ENCODE measurements at regions of chr19 and their contacts with region 1.

Region 1: GRCh38 chr19:4139614-4140236 is 13.7 kb upstream of the CREB3L3 start:
- DNase-seq: peak; percentile 82
- H3K4me3 ChIP-seq: peak overlapping the region in 1 of 2 experiments; percentile 9; a peak in 1 of 4 replicates
- H3K27ac ChIP-seq: no peak overlapping the region
- H3K4me1 ChIP-seq: no peaks in the 10 kb centered on the region
- H3K27me3 ChIP-seq: no peaks in the 10 kb centered on the region
- CTCF ChIP-seq: peak; percentile 72
- EP300 ChIP-seq: no peak
- RAD21 ChIP-seq: peak; percentile 52

Region 2: DNA sequence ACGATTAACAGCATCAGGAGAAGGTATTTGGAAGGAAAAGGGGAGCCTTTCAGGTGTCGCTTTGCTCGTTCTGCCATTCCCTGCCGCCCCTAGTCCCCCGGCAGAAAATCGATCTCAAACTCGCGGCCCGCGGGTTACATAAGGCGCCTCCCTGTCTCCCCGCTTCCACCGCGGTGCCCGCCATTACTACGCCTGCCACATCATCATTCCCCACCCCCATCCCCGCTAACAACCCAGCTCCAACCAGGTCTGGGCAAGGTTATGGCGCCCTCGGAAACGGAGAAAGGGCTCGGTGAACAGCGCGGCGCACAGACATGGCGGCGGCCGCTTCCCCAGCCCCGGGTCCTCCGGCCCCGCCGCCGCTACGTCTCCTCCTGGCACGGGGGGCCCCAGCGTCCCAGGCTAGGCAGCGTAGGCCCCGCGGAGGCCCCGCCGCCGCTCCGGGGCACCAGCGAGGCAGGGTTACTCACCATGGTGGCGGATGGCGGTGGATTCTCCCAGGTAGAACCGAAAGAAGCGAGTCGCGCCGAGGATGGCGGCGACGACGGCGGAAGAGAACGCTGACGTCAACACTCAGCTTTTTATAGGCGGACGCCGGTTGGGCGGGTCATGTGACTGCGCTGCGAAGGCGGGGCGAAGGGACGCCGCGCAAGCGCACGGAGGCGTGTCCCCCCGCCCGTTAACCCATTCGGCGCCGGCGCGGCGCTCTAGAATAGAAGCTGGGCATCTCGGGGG is 154.7 kb before region 1 on chr19 and contains the start of gene EEF2:
- CTCF ChIA-PET with region 1: interaction called, 18 read pairs
- POLR2A ChIA-PET with region 1: no interaction called
- DNase-seq: peak; percentile 98
- H3K4me3 ChIP-seq: peak within 1 kb of the TSS; percentile 91 to 99
- H3K27ac ChIP-seq: peak within 1 kb of the TSS; percentile 90 to 91
- H3K4me1 ChIP-seq: peaks cover 15 to 37% of the 10 kb centered on the region in 2 experiments
- H3K27me3 ChIP-seq: no peaks in the 10 kb centered on the region
- CTCF ChIP-seq: no peak
- EP300 ChIP-seq: peak in 1 of 2 experiments; percentile 32; a peak in 1 of 4 replicates
- RAD21 ChIP-seq: no peak
- polyA plus RNA-seq, gene EEF2: 1,295 and 1,553 TPM in 2 replicates

Region 3: DNA sequence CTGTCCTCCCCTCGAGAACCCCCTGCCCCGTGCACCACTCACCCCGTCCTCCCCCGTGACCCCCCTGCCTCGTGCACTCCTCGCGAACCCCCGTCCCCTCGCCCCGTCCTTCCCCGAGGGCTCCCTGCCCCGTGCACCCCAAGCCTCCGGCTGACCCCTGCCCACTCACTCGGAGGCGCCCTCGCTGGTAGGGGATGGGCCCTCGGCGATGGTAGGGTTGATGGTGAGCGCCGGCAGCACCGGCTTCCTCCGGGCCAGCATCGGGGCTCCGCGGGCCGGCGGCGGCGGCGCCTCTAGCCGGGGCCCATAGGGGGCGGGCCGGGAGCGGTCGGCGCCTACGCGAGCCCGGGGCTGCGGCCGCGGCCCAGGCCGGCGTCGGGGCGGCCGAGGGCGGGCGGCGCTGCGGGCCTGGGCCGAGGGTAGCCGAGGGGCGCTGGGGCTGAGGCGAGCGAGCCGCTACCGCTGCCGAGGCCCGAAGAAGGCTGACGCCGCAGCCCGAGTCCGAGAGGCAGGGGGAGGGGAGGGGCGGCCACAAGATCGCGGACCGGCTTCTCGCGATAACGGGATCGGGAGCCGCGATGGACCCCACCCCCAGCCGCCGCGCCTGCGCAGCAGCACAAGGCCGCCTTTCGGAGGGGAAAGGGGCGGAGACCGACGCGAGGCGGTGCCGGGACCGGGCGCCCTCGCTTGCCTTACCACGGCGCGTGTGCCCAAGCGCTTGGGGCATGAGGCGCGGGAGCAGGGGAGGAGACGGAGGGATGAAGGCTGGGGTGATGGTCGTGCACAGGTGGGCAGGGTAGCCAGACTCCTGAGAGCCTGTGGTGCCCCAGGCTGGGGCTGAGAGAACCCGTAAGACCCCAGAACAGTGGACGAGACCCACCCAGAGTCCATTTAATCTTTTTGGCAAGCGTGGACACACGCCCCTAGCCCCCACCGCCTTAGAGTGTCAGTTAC is 15.8 kb before region 1 on chr19 and contains the start of gene MAP2K2:
- CTCF ChIA-PET with region 1: interaction called, 41 read pairs
- POLR2A ChIA-PET with region 1: no interaction called
- DNase-seq: peak; percentile 100
- H3K4me3 ChIP-seq: peak within 1 kb of the TSS; percentile 65 to 74
- H3K27ac ChIP-seq: peak within 1 kb of the TSS in 1 of 2 experiments; percentile 76; a peak in 2 of 4 replicates
- H3K4me1 ChIP-seq: peaks cover 0 to 14% of the 10 kb centered on the region in 2 experiments; a peak in 2 of 4 replicates
- H3K27me3 ChIP-seq: no peaks in the 10 kb centered on the region
- CTCF ChIP-seq: no peak
- EP300 ChIP-seq: no peak
- RAD21 ChIP-seq: no peak
- polyA plus RNA-seq, gene MAP2K2: 67.2 and 114 TPM in 2 replicates

Region 4: DNA sequence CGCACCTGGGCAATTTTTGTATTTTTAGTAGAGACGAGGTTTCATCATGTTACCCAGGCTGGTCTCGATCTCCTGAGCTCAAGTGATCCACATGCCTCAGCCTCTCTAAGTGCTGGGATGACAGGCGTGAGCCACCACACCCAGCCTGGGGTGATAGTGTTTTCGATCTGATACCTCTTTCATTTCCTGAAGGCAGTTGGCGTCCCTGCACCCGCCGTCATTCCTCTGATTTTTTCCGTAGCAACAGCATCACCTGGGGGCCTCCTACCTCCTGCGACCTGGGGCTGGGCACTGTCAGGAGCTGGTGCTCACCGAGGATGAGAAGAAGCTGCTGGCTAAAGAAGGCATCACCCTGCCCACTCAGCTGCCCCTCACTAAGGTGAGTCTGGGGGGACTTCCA is 24.5 kb after region 1 on chr19:
- CTCF ChIA-PET with region 1: interaction called, 26 read pairs
- POLR2A ChIA-PET with region 1: no interaction called
- DNase-seq: no peak
- H3K4me3 ChIP-seq: no peak overlapping the region
- H3K27ac ChIP-seq: no peak overlapping the region
- H3K4me1 ChIP-seq: no peaks in the 10 kb centered on the region
- H3K27me3 ChIP-seq: peaks cover 84% of the 10 kb centered on the region
- CTCF ChIP-seq: no peak
- EP300 ChIP-seq: no peak
- RAD21 ChIP-seq: no peak

Region 5: DNA sequence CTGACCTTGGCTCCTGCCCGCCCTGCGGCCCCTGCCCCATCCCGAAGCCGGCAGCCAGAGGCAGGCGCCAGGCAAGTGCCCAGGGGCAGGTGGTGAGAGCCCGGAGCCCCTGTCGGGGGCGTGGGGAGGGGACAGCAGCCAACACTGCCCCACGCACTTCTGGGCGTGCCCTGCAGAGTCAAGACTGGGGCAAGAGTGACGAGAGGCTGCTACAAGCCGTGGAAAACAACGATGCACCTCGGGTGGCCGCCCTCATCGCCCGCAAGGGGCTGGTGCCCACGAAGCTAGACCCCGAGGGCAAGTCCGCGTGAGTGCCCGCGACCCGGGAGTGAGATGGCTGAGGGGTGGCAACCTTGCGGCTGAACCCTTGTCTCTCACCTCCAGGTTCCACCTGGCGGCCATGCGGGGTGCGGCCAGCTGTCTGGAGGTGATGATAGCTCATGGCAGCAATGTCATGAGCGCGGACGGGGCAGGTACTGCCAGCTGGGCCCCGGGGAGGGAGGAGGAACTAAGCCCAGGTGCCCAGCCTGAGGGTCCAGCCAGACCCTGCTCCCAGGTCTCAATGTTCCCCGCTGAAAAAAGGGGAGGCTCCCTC is 60.1 kb after region 1 on chr19:
- CTCF ChIA-PET with region 1: interaction called, 22 read pairs
- POLR2A ChIA-PET with region 1: no interaction called
- DNase-seq: peak; percentile 53
- H3K4me3 ChIP-seq: no peak overlapping the region
- H3K27ac ChIP-seq: no peak overlapping the region
- H3K4me1 ChIP-seq: no peaks in the 10 kb centered on the region
- H3K27me3 ChIP-seq: peaks cover 71% of the 10 kb centered on the region
- CTCF ChIP-seq: peak; percentile 24
- EP300 ChIP-seq: no peak
- RAD21 ChIP-seq: no peak

Measured in SK-N-SH (cell line).